ENCODE measurements at regions of chr2 and their contacts with region 1.

Region 1: DNA sequence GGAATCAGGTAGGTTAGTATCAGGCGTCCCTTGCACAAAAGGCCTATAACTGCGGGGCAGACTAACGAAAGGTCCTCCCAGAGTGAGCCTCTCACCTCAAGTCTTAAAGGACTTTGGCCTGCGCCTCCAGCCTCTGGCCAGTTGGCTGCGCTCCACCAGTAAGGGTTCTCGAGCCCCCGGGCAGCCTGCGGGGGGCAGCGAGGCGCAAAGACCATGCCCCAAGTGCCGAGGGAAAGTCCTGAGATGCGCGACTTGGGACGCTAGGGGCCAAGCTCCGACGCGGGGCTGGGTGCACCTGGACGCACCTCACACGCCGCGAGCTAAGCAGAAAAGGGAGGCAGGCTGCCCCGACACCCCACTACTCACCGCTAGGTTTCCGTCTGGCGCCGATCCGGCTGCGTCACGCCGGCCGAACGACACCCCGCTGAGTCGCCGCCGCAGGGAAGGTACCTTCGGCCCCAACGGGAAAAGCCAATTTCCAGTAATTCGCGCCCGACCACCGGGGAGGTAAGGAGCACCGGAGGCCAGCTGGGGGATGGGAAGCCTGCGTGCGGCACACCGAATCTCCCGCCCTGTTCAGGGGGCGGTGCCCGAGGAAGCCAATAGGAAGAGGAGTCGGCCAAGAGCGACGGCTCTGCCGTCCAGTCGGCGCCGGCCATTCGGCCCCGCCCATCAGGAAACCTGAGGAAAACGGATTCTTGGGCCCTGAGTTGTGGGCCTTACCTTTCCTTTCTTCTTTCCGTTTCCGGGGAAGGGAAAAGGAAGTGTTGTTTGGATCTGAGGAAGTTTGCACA is at the start of gene ORC2:
- DNase-seq: peak; percentile 96
- H3K4me3 ChIP-seq: peak within 1 kb of the TSS; percentile 82 to 88
- H3K27ac ChIP-seq: peak within 1 kb of the TSS; percentile 75 to 82
- H3K4me1 ChIP-seq: peaks cover 11 to 12% of the 10 kb centered on the region in 2 experiments; a peak in 3 of 4 replicates
- H3K27me3 ChIP-seq: no peaks in the 10 kb centered on the region
- CTCF ChIP-seq: peak; percentile 72
- EP300 ChIP-seq: no peak
- RAD21 ChIP-seq: peak; percentile 45
- polyA plus RNA-seq, gene ORC2: 3.4 and 3.9 TPM in 2 replicates

Region 2: GRCh38 chr2:200975672-200976071 is 12.4 kb after region 1 on chr2:
- CTCF ChIA-PET with region 1: interaction called, 23 read pairs
- POLR2A ChIA-PET with region 1: no interaction called
- DNase-seq: no peak
- H3K4me3 ChIP-seq: no peak overlapping the region
- H3K27ac ChIP-seq: no peak overlapping the region
- H3K4me1 ChIP-seq: no peaks in the 10 kb centered on the region
- H3K27me3 ChIP-seq: no peaks in the 10 kb centered on the region
- CTCF ChIP-seq: no peak
- EP300 ChIP-seq: no peak
- RAD21 ChIP-seq: no peak

Measured in SK-N-SH (cell line).